Cardiac septum (tissue), 1 donor: ENCODE measurements at regions of chr3 and their contacts with region 1.

Region 1: GRCh38 chr3:127672516-127673190 is at the start of gene ABTB1:
- DNase-seq: peak; percentile 96
- total RNA-seq, gene ABTB1: 25.5 TPM

Region 2: DNA sequence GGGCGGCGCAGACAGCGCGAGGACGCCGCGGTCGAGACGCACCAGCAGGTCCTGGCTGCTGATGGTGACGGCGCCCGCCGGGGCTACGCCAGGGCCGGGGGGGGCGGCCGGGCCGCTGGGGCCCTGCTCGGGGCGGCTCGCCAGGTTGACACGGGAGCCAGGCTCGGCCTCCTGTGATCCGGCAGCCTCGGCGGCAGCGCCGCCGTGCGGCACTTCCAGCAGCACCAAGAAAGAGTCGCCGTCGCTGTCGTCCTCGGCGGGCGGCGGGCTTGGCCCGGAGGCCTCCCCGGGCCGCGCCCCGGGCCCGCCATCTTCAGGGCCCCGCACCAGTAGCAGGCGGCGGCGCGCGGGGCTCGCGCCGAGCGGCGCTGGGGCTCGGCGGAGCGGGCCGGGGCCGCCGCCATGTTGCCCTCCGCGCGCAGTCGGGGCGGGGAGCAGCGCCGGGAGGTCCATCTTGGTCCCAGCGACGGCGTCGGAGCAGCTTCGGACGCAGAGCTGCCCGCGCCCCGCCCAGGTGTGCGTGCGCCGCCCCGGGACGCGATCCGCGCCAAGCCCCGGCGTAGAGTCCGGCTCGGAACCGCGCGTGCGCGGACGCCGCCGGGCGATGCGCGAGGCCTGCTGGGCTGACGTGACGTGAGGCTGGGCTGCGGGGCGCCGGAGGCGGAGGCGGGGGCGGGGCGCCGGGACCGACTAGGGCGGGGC is 1197.1 kb before region 1 on chr3 and contains the start of gene ZXDC:
- intact Hi-C with region 1: loop called (anchors 10 kb)
- DNase-seq: peak; percentile 99
- total RNA-seq, gene ZXDC: 22.0 TPM

Region 3: GRCh38 chr3:127473244-127474024 is 199.2 kb before region 1 on chr3:
- intact Hi-C with region 1: no loop called
- DNase-seq: no peak

Region 4: GRCh38 chr3:127590593-127591477 is 81.8 kb before region 1 on chr3 and contains the start of gene TPRA1:
- intact Hi-C with region 1: loop called (anchors 5 kb)
- DNase-seq: peak; percentile 93
- total RNA-seq, gene TPRA1: 17.3 TPM

Region 5: DNA sequence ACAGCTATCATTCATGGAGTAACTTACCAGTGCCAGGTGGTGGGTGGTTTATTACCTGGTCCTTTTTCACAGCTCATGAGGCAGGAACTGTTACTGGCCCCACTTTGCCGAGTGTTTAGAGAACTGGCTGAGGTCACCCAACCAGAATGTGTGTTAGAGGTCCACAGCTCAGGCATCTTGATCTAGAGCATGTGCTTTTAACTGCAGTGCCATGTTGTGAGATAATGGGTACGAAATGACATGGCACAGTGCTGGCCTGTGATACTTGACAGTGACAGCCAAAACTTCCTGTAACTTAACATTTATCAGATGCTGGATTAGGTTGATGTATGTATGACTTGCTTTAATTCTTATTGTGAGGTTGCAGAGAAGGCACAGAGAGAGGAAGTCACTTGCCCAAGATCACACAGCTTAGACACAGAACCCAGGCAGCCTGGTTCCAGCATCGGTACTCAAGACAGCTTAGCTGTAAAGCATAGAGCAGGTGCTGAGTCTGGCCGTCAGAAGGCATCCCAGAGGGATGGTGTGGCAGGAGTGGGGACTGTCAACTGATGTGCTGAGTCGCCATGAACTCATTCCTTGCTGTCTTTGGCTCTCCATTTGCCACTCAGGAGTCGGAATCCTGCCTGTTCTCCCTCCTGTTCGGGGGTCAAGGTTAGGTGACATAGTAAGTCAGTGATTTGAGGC is 64.8 kb before region 1 on chr3:
- intact Hi-C with region 1: loop called (anchors 2 kb)
- DNase-seq: peak; percentile 74